Mammary epithelial cell (primary cell): ENCODE measurements at regions of chr9 and their contacts with region 1.

Region 1: DNA sequence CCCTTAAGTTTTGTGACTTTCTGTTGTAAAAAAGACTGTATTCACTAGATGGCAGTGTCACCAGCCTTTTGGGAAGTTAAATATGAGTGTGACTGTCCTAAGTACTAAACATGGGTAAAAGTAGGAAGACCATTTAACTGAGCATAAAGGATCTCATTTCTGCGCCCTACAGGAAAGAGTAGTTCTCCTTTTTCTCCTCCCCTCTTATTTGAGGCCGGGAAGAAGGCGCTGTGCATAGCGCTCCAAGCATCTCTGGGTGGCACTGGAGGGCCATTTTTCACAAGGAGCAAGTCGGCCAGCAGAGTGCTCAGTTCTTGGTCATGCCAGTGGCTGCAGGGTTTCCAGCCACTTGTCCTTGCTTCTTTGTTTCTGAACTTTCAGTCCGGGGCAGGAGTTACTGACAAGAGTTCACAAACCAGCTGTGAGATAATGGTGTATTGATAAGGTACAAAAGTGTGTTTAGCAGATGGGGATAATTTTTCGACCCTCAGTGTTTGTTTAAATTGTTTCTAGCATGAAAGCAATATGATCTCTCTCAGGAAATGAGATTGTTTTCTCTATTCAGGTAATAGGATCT is 227.6 kb upstream of the DMRT1 start:
- DNase-seq: peak; percentile 80
- H3K4me3 ChIP-seq: no peak overlapping the region
- H3K27ac ChIP-seq: peak overlapping the region; percentile 39
- H3K4me1 ChIP-seq: peaks cover 31% of the 10 kb centered on the region
- H3K27me3 ChIP-seq: no peaks in the 10 kb centered on the region
- CTCF ChIP-seq: peak; percentile 87 to 94

Region 2: DNA sequence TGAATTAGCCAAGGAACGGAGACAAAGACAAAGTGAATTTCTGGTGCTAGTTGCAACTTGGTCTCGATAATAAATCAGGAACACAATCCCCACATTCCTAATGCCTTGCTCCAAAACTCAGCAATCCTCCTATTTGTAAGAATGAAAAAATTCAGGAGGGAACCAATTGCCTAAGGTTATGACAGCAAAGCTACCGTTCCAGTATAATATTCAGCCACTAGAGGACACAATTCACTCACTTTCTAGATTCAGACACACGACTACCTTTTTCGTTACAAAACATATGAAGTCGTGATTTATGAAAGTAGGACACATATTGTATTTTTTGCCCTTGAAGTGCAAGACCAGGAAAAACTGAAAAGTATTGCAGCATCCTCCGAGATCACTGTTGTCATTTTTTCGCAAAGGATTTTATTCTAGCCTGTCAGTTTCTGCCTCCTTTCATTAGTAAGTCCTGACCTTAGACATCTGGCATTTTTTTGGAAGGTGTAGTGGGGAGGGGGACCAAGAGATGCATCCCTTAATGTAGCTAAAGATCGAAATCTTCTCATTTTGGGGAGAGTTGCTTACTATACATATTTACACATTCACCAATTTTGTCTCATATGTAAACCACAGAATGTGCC is 266.1 kb before region 1 on chr9:
- CTCF ChIA-PET with region 1: no interaction called
- dilution Hi-C with region 1: no loop called
- in situ Hi-C with region 1: no loop called
- intact Hi-C with region 1: no loop called
- DNase-seq: peak; percentile 51
- H3K4me3 ChIP-seq: no peak overlapping the region
- H3K27ac ChIP-seq: no peak overlapping the region
- H3K4me1 ChIP-seq: peaks cover 7% of the 10 kb centered on the region
- H3K27me3 ChIP-seq: no peaks in the 10 kb centered on the region
- CTCF ChIP-seq: peak; percentile 87 to 98

Region 3: DNA sequence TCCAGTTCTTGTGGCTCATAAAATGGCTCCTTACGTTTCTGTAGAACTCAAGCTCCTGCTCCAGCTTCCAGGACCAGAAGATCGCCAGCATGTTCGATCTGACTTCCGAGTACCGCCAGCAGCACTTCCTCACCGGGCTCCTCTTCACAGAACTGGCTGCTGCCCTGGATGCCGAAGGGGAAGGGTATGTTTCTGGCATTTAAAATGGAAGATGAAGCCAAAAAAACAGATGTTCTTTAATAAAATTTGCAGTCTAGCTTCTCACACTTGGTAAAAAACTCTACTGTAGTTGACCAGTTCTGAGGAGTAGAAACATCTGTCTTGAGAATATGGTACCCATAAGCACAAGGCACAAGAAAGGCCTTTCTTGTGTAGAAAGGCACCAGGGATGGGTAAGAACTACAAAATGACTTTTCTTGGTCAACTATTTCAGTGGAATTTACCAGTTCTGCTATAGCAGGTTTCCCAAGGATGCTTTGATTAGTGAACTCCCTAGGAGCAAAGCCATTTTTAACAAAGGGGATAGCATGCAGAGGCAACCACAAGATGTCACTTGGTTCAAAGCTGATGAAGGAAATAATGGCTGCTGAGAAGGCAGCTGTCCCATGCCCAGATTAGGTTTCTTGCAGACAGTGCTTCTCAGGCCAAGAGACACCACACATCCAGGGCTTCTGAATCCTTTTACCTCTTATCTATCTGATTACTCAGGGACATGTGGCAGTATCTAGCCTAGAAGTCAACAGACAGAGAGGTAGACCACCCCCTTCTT is 206.8 kb before region 1 on chr9:
- CTCF ChIA-PET with region 1: no interaction called
- dilution Hi-C with region 1: no loop called
- in situ Hi-C with region 1: no loop called
- intact Hi-C with region 1: loop called (anchors 5 kb)
- DNase-seq: no peak
- H3K4me3 ChIP-seq: no peak overlapping the region
- H3K27ac ChIP-seq: no peak overlapping the region
- H3K4me1 ChIP-seq: no peaks in the 10 kb centered on the region
- H3K27me3 ChIP-seq: no peaks in the 10 kb centered on the region
- CTCF ChIP-seq: peak in 1 of 2 donors; percentile 53

Region 4: GRCh38 chr9:693201-694091 is 79.6 kb after region 1 on chr9:
- CTCF ChIA-PET with region 1: interaction called, 8 read pairs
- dilution Hi-C with region 1: no loop called
- in situ Hi-C with region 1: no loop called
- intact Hi-C with region 1: loop called (anchors 2 kb)
- DNase-seq: no peak
- H3K4me3 ChIP-seq: peak overlapping the region in 1 of 3 experiments; percentile 8
- H3K27ac ChIP-seq: peak overlapping the region; percentile 90
- H3K4me1 ChIP-seq: peaks cover 71% of the 10 kb centered on the region
- H3K27me3 ChIP-seq: no peaks in the 10 kb centered on the region
- CTCF ChIP-seq: no peak

Region 5: GRCh38 chr9:757246-757881 is 143.5 kb after region 1 on chr9:
- CTCF ChIA-PET with region 1: no interaction called
- dilution Hi-C with region 1: no loop called
- in situ Hi-C with region 1: loop called (anchors 5 kb)
- intact Hi-C with region 1: loop called (anchors 1 kb)
- DNase-seq: peak; percentile 51
- H3K4me3 ChIP-seq: no peak overlapping the region
- H3K27ac ChIP-seq: no peak overlapping the region
- H3K4me1 ChIP-seq: peaks cover 25% of the 10 kb centered on the region
- H3K27me3 ChIP-seq: no peaks in the 10 kb centered on the region
- CTCF ChIP-seq: peak; percentile 46 to 74

Region 6: GRCh38 chr9:806285-807156 is 192.7 kb after region 1 on chr9:
- CTCF ChIA-PET with region 1: no interaction called
- dilution Hi-C with region 1: no loop called
- in situ Hi-C with region 1: no loop called
- intact Hi-C with region 1: loop called (anchors 1 kb)
- DNase-seq: peak; percentile 24
- H3K4me3 ChIP-seq: no peak overlapping the region
- H3K27ac ChIP-seq: no peak overlapping the region
- H3K4me1 ChIP-seq: peaks cover 10% of the 10 kb centered on the region
- H3K27me3 ChIP-seq: no peaks in the 10 kb centered on the region
- CTCF ChIP-seq: peak; percentile 73 to 76

Region 7: DNA sequence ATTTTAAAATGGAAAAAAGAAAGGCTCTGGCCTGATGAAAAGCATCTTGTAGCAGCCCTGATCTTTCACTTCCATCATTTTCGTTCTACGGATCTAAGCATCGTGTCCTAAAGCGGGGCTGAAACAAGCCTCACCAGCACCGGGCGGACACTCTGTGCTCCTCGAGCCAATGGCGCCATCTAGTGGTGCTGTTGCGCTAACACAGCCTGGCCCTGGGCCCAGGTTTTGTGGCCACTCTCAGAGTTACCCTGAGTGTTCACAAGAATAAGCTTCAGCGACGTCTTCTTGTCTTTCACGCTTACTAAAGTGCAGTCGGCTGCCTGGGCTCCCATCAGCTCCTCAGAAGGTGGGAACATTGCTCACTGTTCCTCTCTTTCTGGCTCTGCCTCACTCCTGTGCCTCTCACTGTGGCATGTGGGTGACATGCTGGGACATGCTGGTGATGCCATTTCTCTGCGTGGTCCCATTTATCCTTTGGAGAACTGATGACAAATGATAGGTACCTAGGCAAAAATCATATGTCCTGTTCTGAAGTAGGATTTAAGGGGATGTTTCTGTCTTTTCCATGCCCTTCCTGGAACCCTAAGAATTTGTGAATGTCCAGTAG is 395.3 kb after region 1 on chr9:
- CTCF ChIA-PET with region 1: no interaction called
- dilution Hi-C with region 1: no loop called
- in situ Hi-C with region 1: no loop called
- intact Hi-C with region 1: loop called (anchors 2 kb)
- DNase-seq: peak; percentile 69
- H3K4me3 ChIP-seq: no peak overlapping the region
- H3K27ac ChIP-seq: no peak overlapping the region
- H3K4me1 ChIP-seq: peaks cover 6% of the 10 kb centered on the region
- H3K27me3 ChIP-seq: no peaks in the 10 kb centered on the region
- CTCF ChIP-seq: peak; percentile 98 to 99